ENCODE measurements at regions of chr6 and their contacts with region 1.

Region 1: DNA sequence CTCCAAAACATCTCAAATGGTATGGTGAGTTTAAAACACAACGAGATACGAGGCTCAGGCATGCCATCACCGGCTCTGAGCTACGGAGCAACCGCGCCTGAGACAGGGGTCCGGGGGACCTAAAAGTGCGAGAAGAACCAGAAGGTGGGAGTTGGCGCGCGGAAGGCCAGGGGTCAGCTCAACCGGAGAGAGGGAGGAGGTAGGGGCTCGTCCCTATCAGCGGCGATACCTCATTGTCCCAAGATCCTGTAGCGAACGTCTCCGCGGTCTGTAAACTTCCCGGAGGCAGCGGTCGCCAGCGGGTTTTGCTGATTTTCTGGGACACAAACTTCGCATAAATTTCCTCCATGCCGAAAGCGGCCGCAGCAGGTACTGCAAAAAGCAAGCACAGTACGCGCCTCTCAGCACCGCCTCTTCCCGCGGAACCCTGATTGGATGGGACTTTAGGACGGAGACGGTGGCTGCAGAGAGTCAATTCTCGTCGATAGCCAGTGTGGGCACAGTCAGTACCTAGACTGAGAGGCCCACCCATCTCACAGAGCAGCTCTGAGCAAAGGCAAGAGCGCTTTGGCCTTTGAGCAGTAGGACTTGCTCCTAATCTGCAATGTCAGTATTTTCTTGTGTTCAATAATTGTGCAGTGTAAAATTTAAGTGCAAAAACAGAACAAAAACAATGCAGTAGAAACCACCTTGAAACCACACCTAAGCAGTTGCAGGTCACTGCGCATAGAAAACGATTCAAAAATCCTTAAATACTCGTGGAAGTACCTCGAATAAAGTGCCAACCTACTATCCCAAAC is at the start of gene NUP43:
- DNase-seq: peak; percentile 98
- H3K4me3 Mint-ChIP-seq: peak within 1 kb of the TSS; percentile 99
- H3K27ac Mint-ChIP-seq: peak within 1 kb of the TSS; percentile 94
- H3K4me1 Mint-ChIP-seq: peaks cover 20% of the 10 kb centered on the region
- H3K27me3 Mint-ChIP-seq: no peaks in the 10 kb centered on the region
- total RNA-seq, gene NUP43: 78.9 and 93.7 TPM in 2 replicates

Region 2: DNA sequence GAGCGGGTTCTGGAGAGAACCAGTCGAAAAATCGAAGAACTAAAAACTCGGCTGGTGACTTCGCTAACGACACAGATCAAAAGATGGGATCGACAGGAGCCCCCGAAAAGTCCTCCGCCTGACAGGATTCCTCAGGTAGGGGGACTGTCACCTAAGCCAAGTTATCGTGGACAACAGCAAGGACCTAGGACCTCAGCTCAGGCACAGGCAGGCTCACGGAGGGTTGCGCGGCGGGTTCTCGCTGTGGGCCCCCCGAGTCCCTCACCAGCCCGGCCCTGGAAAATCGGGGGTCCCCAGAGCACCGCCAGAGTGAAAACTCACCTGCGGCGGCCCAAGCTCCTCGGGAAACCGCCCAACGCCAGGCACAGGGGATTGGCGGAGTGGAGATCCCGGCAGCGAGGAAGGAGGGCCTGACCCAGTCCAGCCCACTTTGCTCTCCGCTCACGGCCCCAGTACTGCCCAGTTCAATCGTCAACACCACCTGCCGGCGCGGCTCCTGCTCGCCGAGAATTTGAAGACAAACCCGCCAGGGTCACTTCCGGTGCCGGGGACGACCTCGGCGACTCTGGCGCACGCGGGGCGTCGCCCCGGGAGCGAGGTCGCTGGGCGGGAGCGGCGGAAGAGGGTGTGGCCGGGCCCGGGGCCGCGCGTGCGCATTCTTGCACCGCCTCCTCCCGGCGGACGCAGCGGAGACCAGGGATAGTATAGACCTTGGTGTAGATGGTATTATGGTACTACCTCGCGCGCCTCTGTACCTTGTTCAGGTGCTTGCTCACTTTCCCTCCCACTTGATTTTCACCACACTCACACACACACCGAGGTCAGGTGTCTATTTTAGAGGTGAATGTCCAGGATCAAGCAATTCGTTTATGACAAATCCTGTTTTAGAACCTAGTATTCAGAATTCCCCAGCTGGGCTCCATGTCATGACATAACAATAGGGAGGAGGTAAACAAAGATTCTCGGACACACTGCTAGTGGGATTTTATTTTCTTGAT is 97.9 kb before region 1 on chr6 and contains the start of gene KATNA1:
- intact Hi-C with region 1: loop called (anchors 1 kb)
- DNase-seq: peak; percentile 97
- H3K4me3 Mint-ChIP-seq: peak within 1 kb of the TSS; percentile 85
- H3K27ac Mint-ChIP-seq: peak within 1 kb of the TSS; percentile 87
- H3K4me1 Mint-ChIP-seq: peaks cover 23% of the 10 kb centered on the region
- H3K27me3 Mint-ChIP-seq: no peaks in the 10 kb centered on the region
- total RNA-seq, gene KATNA1: 18.9 and 23.0 TPM in 2 replicates

Region 3: DNA sequence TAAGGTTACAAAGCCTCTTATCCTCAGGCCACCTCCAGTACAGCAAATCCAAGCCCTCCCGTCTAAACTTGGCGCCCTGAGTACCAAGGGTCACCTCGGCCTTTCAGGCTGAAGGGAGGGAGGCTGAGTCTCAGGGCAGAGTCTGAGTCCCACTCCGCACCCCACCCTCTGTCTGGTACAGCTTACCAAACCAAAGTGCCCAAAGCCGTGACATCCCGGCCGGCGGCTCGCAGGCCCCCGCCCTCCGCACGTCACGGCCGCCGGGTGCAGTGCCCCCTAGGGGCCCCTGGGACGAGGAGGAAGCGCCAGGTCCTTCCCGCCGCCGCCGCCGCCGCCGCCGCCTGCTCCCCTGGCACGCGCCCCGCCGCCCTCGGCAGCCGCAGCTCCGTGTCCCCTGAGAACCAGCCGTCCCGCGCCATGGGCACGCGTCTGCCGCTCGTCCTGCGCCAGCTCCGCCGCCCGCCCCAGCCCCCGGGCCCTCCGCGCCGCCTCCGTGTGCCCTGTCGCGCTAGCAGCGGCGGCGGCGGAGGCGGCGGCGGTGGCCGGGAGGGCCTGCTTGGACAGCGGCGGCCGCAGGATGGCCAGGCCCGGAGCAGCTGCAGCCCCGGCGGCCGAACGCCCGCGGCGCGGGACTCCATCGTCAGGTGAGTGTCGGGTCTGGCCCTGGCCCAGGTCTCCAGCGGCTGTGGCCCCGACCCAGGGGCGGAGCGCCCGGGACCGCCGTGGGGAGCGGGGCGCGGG is 1119.2 kb after region 1 on chr6 and contains the start of gene MTHFD1L:
- intact Hi-C with region 1: loop called (anchors 5 kb)
- DNase-seq: peak; percentile 94
- H3K4me3 Mint-ChIP-seq: peak within 1 kb of the TSS; percentile 98
- H3K27ac Mint-ChIP-seq: peak within 1 kb of the TSS; percentile 93
- H3K4me1 Mint-ChIP-seq: peaks cover 29% of the 10 kb centered on the region
- H3K27me3 Mint-ChIP-seq: peaks cover 10% of the 10 kb centered on the region
- total RNA-seq, gene MTHFD1L: 136 and 137 TPM in 2 replicates

Measured in activated CD4-positive, alpha-beta T cell treated with anti-CD3 and anti-CD28 coated beads, Interleukin-2, amount 10 ng/mL, durations not matched to agents 24 days and 14 days (primary cell).